WTC11 (cell line): ENCODE measurements at regions of chr15 and their contacts with region 1.

Region 1: DNA sequence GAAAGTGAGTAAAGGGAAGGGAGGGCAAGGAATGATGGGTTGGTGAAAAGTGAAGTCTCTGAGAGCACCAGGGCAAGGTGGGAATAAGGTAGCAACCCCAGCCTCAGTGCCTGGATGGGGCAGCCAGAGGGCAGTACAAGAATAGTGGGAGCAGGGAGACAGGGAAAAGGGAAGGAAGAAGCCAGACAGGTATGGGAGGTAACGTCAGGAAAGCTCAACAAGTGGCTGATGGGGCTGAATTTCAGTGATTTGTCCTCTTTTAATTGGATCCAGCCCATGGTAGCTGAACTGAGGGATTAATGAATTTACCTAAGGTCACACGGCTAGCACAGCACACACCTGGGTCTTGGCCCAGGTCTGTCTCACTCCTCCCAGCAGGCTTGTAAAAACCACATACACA is 12.6 kb downstream of the RORA start:
- DNase-seq: peak; percentile 53
- ATAC-seq: peak; percentile 99
- H3K4me3 Mint-ChIP-seq: no peak overlapping the region
- H3K27ac Mint-ChIP-seq: peak overlapping the region; percentile 19; the same call in 1 of the 2 replicates
- H3K4me1 Mint-ChIP-seq: peaks cover 30% of the 10 kb centered on the region
- H3K27me3 Mint-ChIP-seq: no peaks in the 10 kb centered on the region
- CTCF ChIP-seq: 0 out of 2 replicates have a peak, but pooled peaks have one; percentile 21

Region 2: GRCh38 chr15:61169904-61170695 is 46.4 kb before region 1 on chr15:
- CTCF ChIA-PET with region 1: interaction called, 18 read pairs
- POLR2A ChIA-PET with region 1: no interaction called
- DNase-seq: no peak
- ATAC-seq: peak; percentile 13
- H3K4me3 Mint-ChIP-seq: peak overlapping the region; percentile 8
- H3K27ac Mint-ChIP-seq: peak overlapping the region; percentile 98
- H3K4me1 Mint-ChIP-seq: peaks cover 72% of the 10 kb centered on the region
- H3K27me3 Mint-ChIP-seq: no peaks in the 10 kb centered on the region
- CTCF ChIP-seq: no peak

Region 3: GRCh38 chr15:61205346-61205921 is 11.1 kb before region 1 on chr15:
- CTCF ChIA-PET with region 1: interaction called, 10 read pairs
- POLR2A ChIA-PET with region 1: no interaction called
- DNase-seq: no peak
- ATAC-seq: peak; percentile 44
- H3K4me3 Mint-ChIP-seq: no peak overlapping the region
- H3K27ac Mint-ChIP-seq: no peak overlapping the region
- H3K4me1 Mint-ChIP-seq: peaks cover 36% of the 10 kb centered on the region
- H3K27me3 Mint-ChIP-seq: no peaks in the 10 kb centered on the region
- CTCF ChIP-seq: no peak

Region 4: GRCh38 chr15:61227269-61227949 is 10.9 kb after region 1 on chr15:
- CTCF ChIA-PET with region 1: interaction called, 56 read pairs
- POLR2A ChIA-PET with region 1: interaction called, 3 read pairs
- DNase-seq: peak; percentile 38
- ATAC-seq: no peak; the same call in 1 of the 2 replicates
- H3K4me3 Mint-ChIP-seq: peak overlapping the region; percentile 86
- H3K27ac Mint-ChIP-seq: no peak overlapping the region
- H3K4me1 Mint-ChIP-seq: peaks cover 31% of the 10 kb centered on the region
- H3K27me3 Mint-ChIP-seq: peaks cover 5% of the 10 kb centered on the region
- CTCF ChIP-seq: no peak

Region 5: GRCh38 chr15:61621146-61621545 is 404.6 kb after region 1 on chr15:
- CTCF ChIA-PET with region 1: interaction called, 10 read pairs
- POLR2A ChIA-PET with region 1: no interaction called
- DNase-seq: peak; percentile 57
- ATAC-seq: peak; percentile 95
- H3K4me3 Mint-ChIP-seq: no peak overlapping the region
- H3K27ac Mint-ChIP-seq: no peak overlapping the region
- H3K4me1 Mint-ChIP-seq: peaks cover 10% of the 10 kb centered on the region
- H3K27me3 Mint-ChIP-seq: no peaks in the 10 kb centered on the region
- CTCF ChIP-seq: peak; percentile 65